Activated CD4-positive, alpha-beta memory T cell treated with anti-CD3 and anti-CD28 coated beads for 36 hours (primary cell): ENCODE measurements at regions of chr12 and their contacts with region 1.

Region 1: DNA sequence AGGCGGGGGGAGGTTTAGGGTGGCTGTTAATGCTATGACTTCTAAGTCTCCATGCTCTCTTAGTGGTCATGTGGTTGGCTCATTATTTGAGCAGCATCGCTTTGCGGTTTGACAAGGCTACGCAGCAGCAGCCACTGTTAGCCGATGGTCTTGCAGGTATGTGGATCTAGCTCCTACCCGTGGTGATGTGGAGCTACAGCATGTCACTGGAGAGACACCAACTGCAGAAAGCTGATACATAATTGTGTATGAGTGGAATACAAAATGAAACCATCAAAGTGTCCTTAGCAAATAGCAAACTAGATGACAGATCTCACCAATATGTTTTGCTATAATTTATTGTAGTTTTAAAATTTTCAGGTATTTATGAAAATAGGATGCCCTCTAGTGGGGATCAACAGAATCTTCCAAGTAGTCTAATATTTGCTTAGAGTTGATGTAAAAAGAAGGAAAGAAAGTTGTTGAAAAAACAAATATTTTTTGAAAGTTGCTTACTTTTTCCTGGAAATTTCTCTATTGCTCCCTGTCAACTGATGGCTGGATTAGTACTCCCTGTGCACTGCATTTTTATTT is 94.9 kb downstream of the NAV3 start:
- DNase-seq: peak; percentile 17
- H3K4me3 Mint-ChIP-seq: no peak overlapping the region
- H3K27ac Mint-ChIP-seq: no peak overlapping the region
- H3K4me1 Mint-ChIP-seq: no peaks in the 10 kb centered on the region
- H3K27me3 Mint-ChIP-seq: no peaks in the 10 kb centered on the region

Region 2: DNA sequence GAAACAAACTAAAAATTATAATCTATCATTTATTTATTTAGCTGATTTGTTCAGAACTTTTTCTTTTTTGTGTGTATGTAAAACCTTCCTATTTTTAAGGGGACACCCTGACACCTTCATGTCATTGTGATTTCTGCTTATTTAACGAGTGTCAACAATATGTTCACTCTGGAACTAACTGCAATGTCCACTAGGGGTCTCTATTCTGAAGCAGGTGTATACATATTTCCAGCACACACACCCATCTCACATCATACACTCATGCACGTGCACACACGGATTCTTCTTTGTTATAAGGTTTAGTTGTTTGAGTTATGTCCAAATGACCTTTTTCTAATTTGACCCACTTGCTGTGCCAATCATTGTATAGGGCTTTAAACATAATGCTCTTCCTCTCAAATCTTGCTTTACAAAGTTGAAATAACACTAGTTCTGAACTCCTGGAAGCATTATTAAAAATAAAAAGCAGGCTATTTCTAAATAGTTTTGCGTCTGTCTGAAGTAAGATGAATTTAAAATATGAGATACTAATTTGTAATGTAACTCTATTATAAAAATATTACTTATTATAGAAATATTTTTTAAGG is 875.8 kb before region 1 on chr12:
- CTCF ChIA-PET with region 1: interaction called, 3 read pairs
- POLR2A ChIA-PET with region 1: no interaction called
- intact Hi-C with region 1: loop called (anchors 1 kb)
- DNase-seq: no peak
- H3K4me3 Mint-ChIP-seq: no peak overlapping the region
- H3K27ac Mint-ChIP-seq: no peak overlapping the region
- H3K4me1 Mint-ChIP-seq: peaks cover 2% of the 10 kb centered on the region
- H3K27me3 Mint-ChIP-seq: no peaks in the 10 kb centered on the region

Region 3: DNA sequence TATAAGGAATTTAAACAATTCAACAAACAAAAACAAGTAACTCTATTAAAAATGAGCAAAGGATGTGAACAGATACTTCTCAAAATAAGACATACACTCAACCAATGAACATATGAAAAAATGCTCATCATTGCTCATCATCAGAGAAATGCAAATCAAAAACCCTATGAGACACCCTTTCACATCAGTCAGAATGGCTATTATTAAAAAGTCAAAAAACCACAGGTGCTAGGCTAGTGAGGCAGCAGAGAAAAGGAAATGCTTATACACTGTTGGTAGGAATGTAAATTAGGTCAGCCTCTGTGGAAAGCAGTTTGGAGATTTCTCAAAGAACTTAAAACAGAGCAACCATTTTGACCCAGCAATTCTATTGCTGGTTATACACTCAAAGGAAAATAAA is 42.9 kb before region 1 on chr12:
- CTCF ChIA-PET with region 1: no interaction called
- POLR2A ChIA-PET with region 1: no interaction called
- intact Hi-C with region 1: no loop called
- DNase-seq: no peak
- H3K4me3 Mint-ChIP-seq: no peak overlapping the region
- H3K27ac Mint-ChIP-seq: no peak overlapping the region
- H3K4me1 Mint-ChIP-seq: no peaks in the 10 kb centered on the region
- H3K27me3 Mint-ChIP-seq: no peaks in the 10 kb centered on the region